ENCODE measurements at regions of chr2 and their contacts with region 1.

Region 1: GRCh38 chr2:62705007-62705829 is at the start of gene EHBP1:
- DNase-seq: peak; percentile 99
- ATAC-seq: peak; percentile 99
- H3K4me3 ChIP-seq: peak within 1 kb of the TSS; percentile 67 to 97 (median 83)
- H3K27ac ChIP-seq: peak within 1 kb of the TSS; percentile 71 to 94 (median 88)
- H3K4me1 ChIP-seq: peaks cover 0 to 39% (median 18%) of the 10 kb centered on the region in 12 donors
- H3K27me3 ChIP-seq: no peaks in the 10 kb centered on the region
- CTCF ChIP-seq: no peak
- POLR2A ChIP-seq: peak in 1 of 2 donors; percentile 93
- total RNA-seq, gene EHBP1: 17.3 to 34.2 (median 18.5) TPM

Region 2: DNA sequence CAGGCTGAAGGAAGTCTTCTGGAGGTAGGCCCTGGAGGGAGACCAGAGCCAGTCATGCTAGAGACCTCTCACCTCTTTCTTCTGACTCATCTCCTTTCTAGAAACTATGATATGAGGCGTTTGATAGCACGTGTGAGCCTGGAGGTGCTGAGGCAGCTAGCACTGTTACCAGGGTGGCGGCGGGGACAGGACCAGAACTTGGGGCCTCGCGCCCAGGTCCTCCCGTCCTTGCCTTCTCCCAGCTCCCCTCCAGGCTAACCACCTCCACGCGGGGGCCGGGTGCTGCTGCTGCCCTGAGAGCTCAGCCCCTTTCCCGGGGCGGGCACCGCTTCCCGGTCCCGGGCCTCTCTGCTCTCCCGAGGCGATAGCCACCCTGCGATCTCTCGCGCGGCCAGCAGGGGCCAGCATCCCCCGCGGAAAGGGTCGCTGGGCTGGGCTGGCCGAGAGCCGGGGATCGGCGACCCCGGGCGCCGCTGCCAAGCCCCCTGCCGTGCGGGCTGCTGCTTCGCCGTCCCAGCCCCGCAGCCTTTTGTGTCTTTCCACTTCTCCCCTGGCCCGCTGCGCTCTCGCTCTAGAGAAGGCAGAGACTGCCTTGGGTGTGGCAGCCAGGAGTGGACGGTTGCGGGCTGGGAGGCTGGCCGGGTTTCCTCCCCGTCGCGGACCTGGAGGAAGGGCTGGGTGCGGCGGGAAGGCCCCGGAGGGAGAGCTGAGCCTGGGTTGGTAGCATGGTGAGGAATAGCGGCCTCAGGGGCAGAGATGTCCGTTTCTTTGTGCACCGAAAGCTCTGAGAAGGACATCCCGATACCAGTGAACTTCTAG is 248.3 kb before region 1 on chr2:
- intact Hi-C with region 1: loop called in 6 of 10 experiments (anchors 2 to 10 kb)
- DNase-seq: peak; percentile 67 to 87 (median 74)
- ATAC-seq: peak; percentile 57 to 93 (median 88)
- H3K4me3 ChIP-seq: peak overlapping the region; percentile 40 to 90 (median 68)
- H3K27ac ChIP-seq: peak overlapping the region; percentile 43 to 87 (median 74)
- H3K4me1 ChIP-seq: peaks cover 0 to 16% (median 8%) of the 10 kb centered on the region in 12 donors
- H3K27me3 ChIP-seq: no peaks in the 10 kb centered on the region
- CTCF ChIP-seq: peak in 11 of 12 donors; percentile 89 to 100 (median 97)
- POLR2A ChIP-seq: no peak

Region 3: GRCh38 chr2:62467475-62468321 is 237.5 kb before region 1 on chr2:
- intact Hi-C with region 1: loop called in 3 of 10 experiments (anchors 5 to 10 kb)
- DNase-seq: peak in 2 of 5 donors; percentile 41 to 61
- ATAC-seq: peak; percentile 48 to 79 (median 70)
- H3K4me3 ChIP-seq: no peak overlapping the region
- H3K27ac ChIP-seq: peak overlapping the region in 8 of 12 donors; percentile 26 to 72 (median 52)
- H3K4me1 ChIP-seq: peaks cover 0 to 30% (median 9%) of the 10 kb centered on the region in 12 donors
- H3K27me3 ChIP-seq: no peaks in the 10 kb centered on the region
- CTCF ChIP-seq: peak in 1 of 12 donors; percentile 7
- POLR2A ChIP-seq: no peak

Region 4: GRCh38 chr2:62475172-62476011 is 229.8 kb before region 1 on chr2:
- intact Hi-C with region 1: loop called in 2 of 10 experiments (anchors 5 to 10 kb)
- DNase-seq: peak in 2 of 5 donors; percentile 57 to 71
- ATAC-seq: peak; percentile 16 to 53 (median 31)
- H3K4me3 ChIP-seq: peak overlapping the region in 9 of 12 donors; percentile 12 to 40 (median 25)
- H3K27ac ChIP-seq: peak overlapping the region; percentile 27 to 82 (median 68)
- H3K4me1 ChIP-seq: peaks cover 0 to 68% (median 36%) of the 10 kb centered on the region in 12 donors
- H3K27me3 ChIP-seq: no peaks in the 10 kb centered on the region
- CTCF ChIP-seq: peak in 3 of 12 donors; percentile 6 to 24 (median 23)
- POLR2A ChIP-seq: no peak

Region 5: DNA sequence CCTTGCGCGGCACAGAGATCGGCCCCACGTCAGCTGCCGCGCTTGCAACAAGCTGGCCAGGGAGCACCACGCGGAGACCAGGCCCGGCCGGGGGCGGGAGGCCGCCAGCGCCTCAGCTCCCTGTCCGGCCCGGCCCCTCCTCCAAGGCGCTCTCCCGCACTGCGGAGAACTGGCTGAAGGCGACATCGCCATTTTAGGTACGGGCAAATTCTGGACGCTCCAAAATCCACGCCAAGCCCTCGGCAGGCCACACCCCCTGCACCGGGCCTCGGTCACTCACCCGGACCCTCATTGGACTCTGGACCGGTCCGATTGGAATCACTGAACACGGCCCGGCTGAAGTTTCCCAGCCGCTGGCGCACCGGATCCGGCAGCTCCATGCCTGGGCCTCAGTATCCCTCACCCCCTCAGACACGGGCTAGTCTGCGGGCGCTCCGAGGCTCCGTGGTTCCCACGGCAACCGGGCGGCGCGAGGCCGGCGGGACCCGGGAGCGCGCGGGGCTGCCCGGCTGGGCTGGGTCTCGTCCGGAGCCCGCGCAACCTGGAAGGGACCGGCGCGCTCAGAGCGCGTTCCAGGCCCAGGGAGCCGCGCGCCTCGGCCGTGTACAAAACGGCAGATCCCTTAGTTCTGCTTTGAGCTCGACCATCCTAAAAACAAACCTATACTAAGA is 199.3 kb before region 1 on chr2 and contains the start of gene TMEM17:
- intact Hi-C with region 1: loop called in 8 of 10 experiments (anchors 1 to 10 kb)
- DNase-seq: peak; percentile 95 to 96 (median 96)
- ATAC-seq: peak; percentile 98
- H3K4me3 ChIP-seq: peak within 1 kb of the TSS; percentile 58 to 84 (median 76)
- H3K27ac ChIP-seq: peak within 1 kb of the TSS; percentile 80 to 95 (median 88)
- H3K4me1 ChIP-seq: peaks cover 0 to 18% (median 7%) of the 10 kb centered on the region in 12 donors
- H3K27me3 ChIP-seq: no peaks in the 10 kb centered on the region
- CTCF ChIP-seq: peak in 1 of 12 donors; percentile 9
- POLR2A ChIP-seq: peak in 1 of 2 donors; percentile 31
- total RNA-seq, gene TMEM17: 1.2 to 2.3 (median 1.6) TPM

Region 6: GRCh38 chr2:62774555-62775366 is 69.5 kb after region 1 on chr2:
- intact Hi-C with region 1: loop called in 3 of 10 experiments (anchors 5 to 10 kb)
- DNase-seq: no peak
- ATAC-seq: peak in 2 of 4 donors; percentile 52 to 75
- H3K4me3 ChIP-seq: no peak overlapping the region
- H3K27ac ChIP-seq: peak overlapping the region in 1 of 12 donors; percentile 15
- H3K4me1 ChIP-seq: peaks cover 0 to 7% (median 0%) of the 10 kb centered on the region in 12 donors
- H3K27me3 ChIP-seq: no peaks in the 10 kb centered on the region
- CTCF ChIP-seq: peak; percentile 76 to 96 (median 84)
- POLR2A ChIP-seq: no peak

Measured in heart left ventricle (tissue), 16 donors.